ENCODE measurements at regions of chr9 and their contacts with region 1.

Region 1: GRCh38 chr9:97109194-97109811 is 70.4 kb upstream of the CTSV start:
- DNase-seq: peak; percentile 69
- H3K4me3 ChIP-seq: no peak overlapping the region
- H3K27ac ChIP-seq: no peak overlapping the region
- H3K4me1 ChIP-seq: peaks cover 4% of the 10 kb centered on the region
- H3K27me3 ChIP-seq: no peaks in the 10 kb centered on the region
- CTCF ChIP-seq: peak; percentile 63 to 95

Region 2: GRCh38 chr9:96875461-96876364 is 233.6 kb before region 1 on chr9:
- CTCF ChIA-PET with region 1: no interaction called
- dilution Hi-C with region 1: loop called (anchors 10 kb)
- in situ Hi-C with region 1: loop called in 1 of 2 experiments (anchors 25 kb)
- intact Hi-C with region 1: no loop called
- DNase-seq: peak; percentile 74
- H3K4me3 ChIP-seq: peak overlapping the region; percentile 65 to 88 (median 67)
- H3K27ac ChIP-seq: peak overlapping the region; percentile 92
- H3K4me1 ChIP-seq: peaks cover 22% of the 10 kb centered on the region
- H3K27me3 ChIP-seq: no peaks in the 10 kb centered on the region
- CTCF ChIP-seq: peak; percentile 18 to 51

Region 3: DNA sequence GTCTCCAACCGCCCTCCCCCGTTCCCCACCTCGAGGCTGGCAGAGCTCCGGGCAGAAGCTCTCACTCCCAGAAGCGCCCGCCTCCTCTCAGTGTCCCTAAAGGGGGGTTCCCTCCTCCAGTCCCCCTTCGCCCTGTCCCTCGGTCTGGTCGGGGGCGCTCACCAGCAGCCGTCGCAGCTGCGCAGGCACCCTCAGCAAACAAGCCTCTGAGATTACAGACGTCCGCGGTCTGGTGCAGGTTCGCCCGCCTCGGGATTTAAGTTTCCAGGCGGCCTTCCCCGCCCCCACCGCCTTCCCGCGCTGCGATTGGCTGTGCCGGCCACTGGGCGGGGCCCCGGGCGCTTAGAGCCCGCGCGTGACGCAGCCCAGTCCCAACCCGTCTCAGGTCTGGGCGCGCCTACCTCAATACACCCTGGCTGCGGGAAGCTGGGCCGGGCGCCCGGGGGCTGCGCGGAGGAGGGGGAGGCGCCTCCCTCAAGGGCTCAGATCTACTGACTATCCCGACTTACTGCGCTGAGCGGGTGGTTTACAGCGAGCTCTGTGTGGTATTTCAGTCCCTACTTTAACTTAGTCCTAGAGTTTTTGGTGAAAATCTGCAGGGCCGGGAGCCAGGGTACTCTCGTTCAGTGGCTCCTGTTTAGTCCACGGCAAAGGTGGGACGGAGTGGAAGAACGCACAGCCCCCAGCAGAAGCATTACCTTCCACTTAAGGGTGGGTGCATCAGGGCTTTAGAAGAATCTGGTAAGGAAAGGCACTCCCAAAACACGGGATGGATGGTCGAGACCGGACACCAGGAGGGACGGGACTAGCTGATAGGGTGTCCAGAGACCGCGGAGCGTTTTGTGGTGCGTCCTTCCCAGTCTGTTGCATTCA is 70.2 kb before region 1 on chr9 and contains the start of gene CTSV:
- CTCF ChIA-PET with region 1: interaction called, 6 read pairs
- dilution Hi-C with region 1: no loop called
- in situ Hi-C with region 1: no loop called
- intact Hi-C with region 1: loop called (anchors 2 kb)
- DNase-seq: peak; percentile 92
- H3K4me3 ChIP-seq: peak within 1 kb of the TSS; percentile 68 to 91 (median 76)
- H3K27ac ChIP-seq: peak within 1 kb of the TSS; percentile 97
- H3K4me1 ChIP-seq: peaks cover 6% of the 10 kb centered on the region
- H3K27me3 ChIP-seq: no peaks in the 10 kb centered on the region
- CTCF ChIP-seq: no peak
- total RNA-seq, gene CTSV: 22.2 to 101 TPM

Region 4: GRCh38 chr9:97046223-97046622 is 63.1 kb before region 1 on chr9:
- CTCF ChIA-PET with region 1: no interaction called
- dilution Hi-C with region 1: no loop called
- in situ Hi-C with region 1: no loop called
- intact Hi-C with region 1: loop called (anchors 2 kb)
- DNase-seq: peak; percentile 99
- H3K4me3 ChIP-seq: no peak overlapping the region
- H3K27ac ChIP-seq: peak overlapping the region; percentile 93
- H3K4me1 ChIP-seq: peaks cover 21% of the 10 kb centered on the region
- H3K27me3 ChIP-seq: no peaks in the 10 kb centered on the region
- CTCF ChIP-seq: no peak

Measured in mammary epithelial cell (primary cell).